Spleen (tissue), 13 donors: ENCODE measurements at regions of chr6 and their contacts with region 1.

Region 1: DNA sequence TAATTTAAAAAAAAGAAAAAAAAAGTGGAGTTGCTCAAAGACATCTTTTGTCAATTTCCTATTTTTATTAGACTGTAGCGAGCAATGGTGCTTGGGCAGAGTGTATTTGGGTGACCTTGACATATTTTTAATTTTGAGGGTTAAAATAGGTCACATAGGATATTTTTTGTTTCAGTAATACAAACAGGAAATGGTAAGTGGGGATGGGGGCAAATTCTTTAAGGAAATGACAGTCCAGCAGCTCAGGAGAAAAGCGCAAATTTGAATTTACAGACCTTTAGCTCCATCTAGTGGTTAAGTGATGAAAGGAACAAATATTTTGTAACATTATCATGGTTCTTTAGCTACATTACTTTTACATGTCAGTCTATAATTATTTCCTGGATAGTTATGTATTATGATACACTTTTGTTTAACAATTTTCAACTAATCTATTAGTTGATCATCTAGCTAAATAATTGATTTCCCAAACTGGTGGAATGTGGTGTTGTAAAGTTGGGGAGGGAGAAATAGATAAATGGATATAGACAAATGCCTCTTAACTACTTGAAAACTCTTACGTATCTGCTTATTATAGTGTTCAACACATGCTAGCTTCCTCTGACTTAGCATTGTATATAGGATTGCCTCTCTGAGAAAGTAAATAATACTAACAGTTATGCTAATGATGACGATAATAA is 10.0 kb downstream of the CITED2 start:
- DNase-seq: no peak
- H3K4me3 ChIP-seq: no peak overlapping the region
- H3K27ac ChIP-seq: peak overlapping the region in 1 of 8 donors; percentile 36
- H3K4me1 ChIP-seq: peaks cover 8 to 55% (median 26%) of the 10 kb centered on the region in 6 donors
- H3K27me3 ChIP-seq: no peaks in the 10 kb centered on the region
- CTCF ChIP-seq: peak; percentile 28 to 92 (median 75)
- POLR2A ChIP-seq: no peak

Region 2: GRCh38 chr6:138817822-138818308 is 546.6 kb before region 1 on chr6:
- intact Hi-C with region 1: loop called (anchors 5 kb)
- DNase-seq: no peak
- H3K4me3 ChIP-seq: no peak overlapping the region
- H3K27ac ChIP-seq: no peak overlapping the region
- H3K4me1 ChIP-seq: peaks cover 0 to 21% (median 4%) of the 10 kb centered on the region in 6 donors
- H3K27me3 ChIP-seq: no peaks in the 10 kb centered on the region
- CTCF ChIP-seq: no peak
- POLR2A ChIP-seq: no peak

Region 3: GRCh38 chr6:139124887-139125672 is 239.4 kb before region 1 on chr6:
- intact Hi-C with region 1: loop called (anchors 5 kb)
- DNase-seq: peak; percentile 90
- H3K4me3 ChIP-seq: peak overlapping the region in 1 of 8 donors; percentile 11
- H3K27ac ChIP-seq: peak overlapping the region; percentile 55 to 90 (median 84)
- H3K4me1 ChIP-seq: peaks cover 11 to 35% (median 23%) of the 10 kb centered on the region in 6 donors
- H3K27me3 ChIP-seq: no peaks in the 10 kb centered on the region
- CTCF ChIP-seq: peak; percentile 47 to 87 (median 75)
- POLR2A ChIP-seq: no peak

Region 4: DNA sequence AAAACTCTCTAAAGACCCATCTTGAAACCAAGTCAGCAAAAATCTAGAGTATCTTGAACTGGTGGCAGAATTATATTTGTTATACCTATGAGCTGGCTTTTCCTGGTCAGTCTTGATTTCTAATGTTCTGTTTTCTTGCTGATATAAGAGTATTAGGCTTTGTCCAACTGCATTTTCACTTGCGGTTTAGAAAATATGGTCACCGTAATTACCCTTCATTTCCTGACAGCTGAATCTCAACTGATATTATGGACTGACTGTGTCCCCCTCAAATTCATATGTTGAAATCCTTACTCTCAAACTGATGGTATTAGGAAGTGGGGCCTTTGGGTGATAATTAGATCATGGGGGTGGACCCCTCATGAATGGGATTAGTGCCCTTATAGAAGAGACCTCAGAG is 144.7 kb before region 1 on chr6:
- intact Hi-C with region 1: loop called (anchors 5 kb)
- DNase-seq: no peak
- H3K4me3 ChIP-seq: peak overlapping the region in 1 of 8 donors; percentile 8
- H3K27ac ChIP-seq: peak overlapping the region in 7 of 8 donors; percentile 33 to 73 (median 64)
- H3K4me1 ChIP-seq: peaks cover 5 to 14% (median 10%) of the 10 kb centered on the region in 6 donors
- H3K27me3 ChIP-seq: no peaks in the 10 kb centered on the region
- CTCF ChIP-seq: no peak
- POLR2A ChIP-seq: no peak

Region 5: DNA sequence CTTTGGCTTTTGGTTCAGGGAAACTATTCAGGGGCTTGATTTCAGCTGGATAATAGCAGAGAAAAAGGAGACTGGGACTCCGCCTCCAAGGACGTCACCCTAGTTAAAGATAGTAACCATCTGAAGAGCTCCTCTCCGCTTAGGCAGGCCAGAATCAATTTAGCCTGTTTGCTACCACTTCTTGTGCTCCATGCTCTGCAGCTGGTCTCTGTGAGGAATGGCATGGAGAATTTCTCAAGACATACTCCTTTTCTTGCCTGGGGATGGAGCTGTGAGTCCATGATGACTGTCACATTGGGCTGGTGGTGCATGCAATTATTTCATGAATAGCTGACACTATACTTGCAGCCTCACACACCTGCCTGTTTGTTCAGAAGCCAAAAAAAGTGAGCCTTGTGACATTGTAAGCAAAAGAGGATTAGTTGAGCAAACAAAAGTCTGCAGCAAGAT is 134.0 kb before region 1 on chr6:
- intact Hi-C with region 1: no loop called
- DNase-seq: no peak
- H3K4me3 ChIP-seq: no peak overlapping the region
- H3K27ac ChIP-seq: no peak overlapping the region
- H3K4me1 ChIP-seq: no peaks in the 10 kb centered on the region
- H3K27me3 ChIP-seq: no peaks in the 10 kb centered on the region
- CTCF ChIP-seq: no peak
- POLR2A ChIP-seq: no peak

Region 6: GRCh38 chr6:139500977-139501376 is 136.5 kb after region 1 on chr6:
- intact Hi-C with region 1: no loop called
- DNase-seq: no peak
- H3K4me3 ChIP-seq: no peak overlapping the region
- H3K27ac ChIP-seq: no peak overlapping the region
- H3K4me1 ChIP-seq: no peaks in the 10 kb centered on the region
- H3K27me3 ChIP-seq: no peaks in the 10 kb centered on the region
- CTCF ChIP-seq: no peak
- POLR2A ChIP-seq: no peak

Region 7: GRCh38 chr6:139515511-139515910 is 151.1 kb after region 1 on chr6:
- intact Hi-C with region 1: no loop called
- DNase-seq: no peak
- H3K4me3 ChIP-seq: no peak overlapping the region
- H3K27ac ChIP-seq: no peak overlapping the region
- H3K4me1 ChIP-seq: peaks cover 0 to 11% (median 0%) of the 10 kb centered on the region in 6 donors
- H3K27me3 ChIP-seq: no peaks in the 10 kb centered on the region
- CTCF ChIP-seq: no peak
- POLR2A ChIP-seq: no peak